ENCODE measurements at regions of chr7 and their contacts with region 1.

Region 1: GRCh38 chr7:40329601-40330153 is 194.9 kb downstream of the SUGCT start:
- DNase-seq: peak; percentile 72
- H3K4me3 ChIP-seq: no peak overlapping the region
- H3K27ac ChIP-seq: no peak overlapping the region
- H3K4me1 ChIP-seq: peaks cover 2% of the 10 kb centered on the region
- H3K27me3 ChIP-seq: no peaks in the 10 kb centered on the region
- CTCF ChIP-seq: peak; percentile 42 to 47
- POLR2A ChIP-seq: no peak

Region 2: GRCh38 chr7:40680657-40681056 is 351.0 kb after region 1 on chr7:
- CTCF ChIA-PET with region 1: no interaction called
- POLR2A ChIA-PET with region 1: no interaction called
- dilution Hi-C with region 1: no loop called
- intact Hi-C with region 1: no loop called
- DNase-seq: peak; percentile 31
- H3K4me3 ChIP-seq: no peak overlapping the region
- H3K27ac ChIP-seq: no peak overlapping the region
- H3K4me1 ChIP-seq: no peaks in the 10 kb centered on the region
- H3K27me3 ChIP-seq: peaks cover 0 to 2% of the 10 kb centered on the region in 2 experiments
- CTCF ChIP-seq: peak; percentile 14 to 49
- POLR2A ChIP-seq: no peak

Region 3: GRCh38 chr7:41003031-41003925 is 673.6 kb after region 1 on chr7:
- CTCF ChIA-PET with region 1: interaction called, 3 read pairs
- POLR2A ChIA-PET with region 1: no interaction called
- dilution Hi-C with region 1: no loop called
- intact Hi-C with region 1: loop called (anchors 5 kb)
- DNase-seq: peak; percentile 80
- H3K4me3 ChIP-seq: no peak overlapping the region
- H3K27ac ChIP-seq: no peak overlapping the region
- H3K4me1 ChIP-seq: no peaks in the 10 kb centered on the region
- H3K27me3 ChIP-seq: no peaks in the 10 kb centered on the region
- CTCF ChIP-seq: peak; percentile 73 to 77
- POLR2A ChIP-seq: no peak

Region 4: DNA sequence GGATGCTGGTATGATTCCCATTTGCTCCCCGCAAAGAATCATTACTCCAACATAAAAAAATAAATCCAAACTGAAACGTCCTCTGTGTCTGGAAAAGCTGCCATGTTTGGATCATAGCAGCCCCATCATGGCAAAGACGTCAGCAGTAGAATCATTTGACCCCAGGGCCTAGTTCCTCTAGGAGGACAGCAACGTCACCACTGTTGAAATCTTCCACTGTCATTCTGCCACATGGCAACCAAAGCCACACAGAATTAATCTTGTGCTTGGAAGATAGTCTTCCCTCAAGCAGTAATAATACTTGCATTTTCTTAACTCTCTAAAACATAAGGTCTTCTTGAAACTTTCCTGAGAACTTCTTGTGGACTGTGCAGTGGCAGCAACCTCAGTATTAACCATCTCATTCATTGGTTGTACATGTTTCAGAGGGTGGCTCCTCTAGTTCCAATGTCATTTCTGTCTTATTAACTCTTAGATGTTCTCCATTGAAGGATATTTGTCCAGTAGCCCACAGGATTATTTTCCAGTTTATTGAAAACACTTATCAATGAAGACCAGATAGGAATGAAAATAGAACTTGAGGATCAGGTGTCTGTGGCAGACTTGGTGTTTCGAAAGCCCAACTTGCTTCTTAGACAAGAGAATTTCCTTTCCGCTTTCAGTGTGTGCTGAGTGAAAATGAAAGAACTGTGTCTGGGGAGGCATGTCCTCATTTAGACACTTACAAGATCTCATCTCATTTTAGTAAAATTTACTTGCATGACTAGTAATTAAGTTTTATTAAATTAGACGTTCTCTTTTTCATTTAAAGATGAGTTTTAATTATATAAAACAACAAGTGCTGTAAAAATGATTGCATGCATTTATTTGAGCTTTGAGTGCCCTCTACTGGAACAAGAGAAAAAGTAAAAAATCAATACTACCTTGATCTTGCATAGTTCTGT is 1402.1 kb after region 1 on chr7:
- CTCF ChIA-PET with region 1: interaction called, 3 read pairs
- POLR2A ChIA-PET with region 1: no interaction called
- dilution Hi-C with region 1: no loop called
- intact Hi-C with region 1: loop called (anchors 1 kb)
- DNase-seq: peak; percentile 33
- H3K4me3 ChIP-seq: no peak overlapping the region
- H3K27ac ChIP-seq: no peak overlapping the region
- H3K4me1 ChIP-seq: no peaks in the 10 kb centered on the region
- H3K27me3 ChIP-seq: peaks cover 3 to 4% of the 10 kb centered on the region in 2 experiments
- CTCF ChIP-seq: peak; percentile 5 to 8
- POLR2A ChIP-seq: no peak